ENCODE measurements at regions of chr20 and their contacts with region 1.

Region 1: DNA sequence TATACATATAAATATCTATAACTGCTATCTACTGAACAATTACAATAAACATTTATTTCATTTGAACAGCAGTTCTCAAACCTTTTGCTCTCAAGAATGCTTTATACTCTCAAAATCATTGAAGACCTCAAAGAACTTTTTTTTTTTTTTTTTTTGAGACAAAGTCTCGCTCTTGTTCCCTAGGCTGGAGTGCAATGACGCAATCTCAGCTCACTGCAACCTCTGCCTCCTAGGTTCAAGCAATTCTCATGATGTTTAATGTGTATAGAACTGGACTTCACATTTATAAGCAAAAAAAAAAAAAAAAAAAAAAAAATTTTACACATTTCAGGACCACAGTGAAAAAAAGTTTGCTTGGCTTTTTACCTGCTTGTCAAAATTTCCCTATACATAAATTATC is 11.7 kb downstream of the UBE2V1 start:
- DNase-seq: no peak
- H3K4me3 Mint-ChIP-seq: no peak overlapping the region
- H3K27ac Mint-ChIP-seq: no peak overlapping the region
- H3K4me1 Mint-ChIP-seq: peaks cover 24% of the 10 kb centered on the region
- H3K27me3 Mint-ChIP-seq: no peaks in the 10 kb centered on the region

Region 2: GRCh38 chr20:50085452-50086365 is 15.6 kb before region 1 on chr20:
- CTCF ChIA-PET with region 1: interaction called, 27 read pairs
- DNase-seq: peak; percentile 55
- H3K4me3 Mint-ChIP-seq: peak overlapping the region; percentile 53
- H3K27ac Mint-ChIP-seq: peak overlapping the region; percentile 39
- H3K4me1 Mint-ChIP-seq: peaks cover 16% of the 10 kb centered on the region
- H3K27me3 Mint-ChIP-seq: no peaks in the 10 kb centered on the region

Measured in activated naive CD4-positive, alpha-beta T cell treated with anti-CD3 and anti-CD28 coated beads, Interleukin-2, amount 10 ng/mL, durations not matched to agents 7 days and 5 days (primary cell).